HAP-1 (cell line): ENCODE measurements at regions of chr2 and their contacts with region 1.

Region 1: DNA sequence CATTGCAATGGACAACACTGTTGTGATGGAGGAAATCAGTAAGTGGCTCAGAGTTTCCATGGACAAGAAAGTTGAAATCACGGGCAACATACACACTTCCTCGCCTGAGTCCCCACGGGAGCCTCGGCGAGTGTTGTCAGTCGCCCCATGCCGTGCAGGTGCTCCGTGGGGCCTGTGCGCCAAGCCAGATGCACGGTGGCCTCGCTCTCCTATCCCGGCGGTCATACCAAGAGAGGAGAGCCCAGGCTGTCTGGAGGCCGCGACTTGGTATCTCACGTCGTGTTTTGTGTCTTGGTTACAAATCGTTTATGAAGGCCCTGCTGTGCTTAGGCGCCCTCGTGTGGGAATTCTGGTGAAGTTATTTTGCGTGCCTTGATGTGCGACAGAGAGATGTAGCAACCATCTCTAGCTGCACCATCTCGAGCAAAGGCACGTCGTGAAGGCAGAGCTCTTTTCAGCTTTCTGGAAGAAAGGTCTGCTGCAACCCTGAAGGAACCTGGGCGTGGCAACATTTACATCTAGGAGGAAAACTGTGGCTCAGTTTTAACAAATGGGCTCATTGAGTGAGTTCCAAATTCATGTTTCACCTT is 21.8 kb downstream of the ATG4B start:
- DNase-seq: peak; percentile 56 to 74
- H3K4me3 ChIP-seq: no peak overlapping the region
- H3K4me1 ChIP-seq: no peaks in the 10 kb centered on the region
- H3K27me3 ChIP-seq: no peaks in the 10 kb centered on the region

Region 2: GRCh38 chr2:240851078-240851991 is 807.9 kb before region 1 on chr2:
- in situ Hi-C with region 1: loop called (anchors 25 kb)
- DNase-seq: peak; percentile 61 to 91
- H3K4me3 ChIP-seq: no peak overlapping the region
- H3K4me1 ChIP-seq: peaks cover 16% of the 10 kb centered on the region
- H3K27me3 ChIP-seq: no peaks in the 10 kb centered on the region

Region 3: DNA sequence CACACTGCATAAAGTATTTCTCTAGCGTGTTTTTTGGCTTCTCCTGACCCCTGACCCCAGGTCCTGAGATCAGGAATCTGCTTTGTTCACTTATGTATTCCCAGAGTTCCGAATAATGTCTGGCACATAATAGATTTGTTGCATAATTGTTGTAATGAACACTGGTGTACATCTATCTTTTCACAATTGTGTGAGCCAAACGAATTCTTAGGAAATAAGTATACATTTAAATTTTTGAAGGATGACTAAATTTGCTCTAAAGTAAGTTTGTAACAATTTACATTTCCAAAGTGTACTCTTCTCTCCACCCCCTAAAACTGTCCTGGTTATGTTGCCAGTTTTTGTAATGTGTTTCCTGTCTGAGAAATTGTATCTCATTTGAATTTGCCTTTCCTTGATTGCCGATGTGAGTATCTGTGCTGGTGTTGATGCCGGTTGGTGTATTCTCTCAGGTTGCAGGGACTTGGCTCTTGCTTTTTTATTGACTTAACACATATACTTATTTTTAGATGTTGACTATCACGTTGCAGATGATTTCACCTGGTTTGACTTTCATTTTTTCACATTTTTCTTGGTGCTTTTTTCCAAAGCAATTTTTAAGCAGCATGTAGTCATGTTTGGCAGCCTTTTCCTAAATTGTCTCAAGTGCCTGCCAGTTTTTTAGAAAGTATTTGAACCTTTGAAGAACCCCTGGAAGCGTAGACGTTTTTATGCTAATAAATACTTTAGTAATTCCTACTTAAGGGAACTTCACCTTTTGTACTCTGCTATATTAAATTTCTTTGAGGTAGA is 319.2 kb before region 1 on chr2:
- in situ Hi-C with region 1: no loop called
- DNase-seq: no peak
- H3K4me3 ChIP-seq: no peak overlapping the region
- H3K4me1 ChIP-seq: no peaks in the 10 kb centered on the region
- H3K27me3 ChIP-seq: no peaks in the 10 kb centered on the region